AG04449 (cell line): ENCODE measurements at regions of chr10 and their contacts with region 1.

Region 1: DNA sequence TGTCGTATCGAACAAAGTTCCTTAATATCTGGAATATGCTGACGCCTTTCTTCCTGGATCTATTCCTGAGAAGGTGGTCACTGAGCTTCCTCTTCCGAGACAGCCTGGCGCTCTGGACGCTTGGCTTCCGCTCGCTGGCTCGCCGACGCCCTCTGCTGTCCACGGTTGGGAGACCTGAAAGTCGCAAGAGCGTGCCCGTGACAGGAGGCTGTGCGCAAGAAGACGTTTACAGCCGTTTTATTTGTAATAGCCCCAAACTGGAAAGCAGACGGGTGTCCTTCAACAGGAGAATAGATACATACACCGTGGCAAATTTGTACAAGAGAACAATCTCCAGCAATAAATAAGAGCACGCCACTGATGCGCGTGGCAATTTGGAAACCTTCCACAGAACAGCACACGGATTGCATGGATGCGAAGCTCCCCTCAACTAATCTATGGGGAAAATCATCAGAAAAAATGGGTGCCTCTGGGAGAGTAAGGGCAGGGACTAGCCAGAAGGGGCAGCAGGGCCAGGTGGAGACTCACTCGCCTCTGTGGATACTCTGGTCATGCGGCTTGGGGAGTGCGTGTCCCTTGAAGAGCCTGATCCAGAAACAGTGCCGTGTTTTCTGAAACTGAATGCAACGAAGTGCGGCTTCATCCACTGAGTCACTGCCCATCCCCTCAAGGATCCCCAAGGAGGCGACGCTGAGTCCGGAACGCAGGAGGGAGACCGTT is 41.5 kb upstream of the BNIP3 start:
- DNase-seq: peak; percentile 12
- H3K4me3 ChIP-seq: peak overlapping the region; percentile 36
- CTCF ChIP-seq: peak; percentile 95

Region 2: DNA sequence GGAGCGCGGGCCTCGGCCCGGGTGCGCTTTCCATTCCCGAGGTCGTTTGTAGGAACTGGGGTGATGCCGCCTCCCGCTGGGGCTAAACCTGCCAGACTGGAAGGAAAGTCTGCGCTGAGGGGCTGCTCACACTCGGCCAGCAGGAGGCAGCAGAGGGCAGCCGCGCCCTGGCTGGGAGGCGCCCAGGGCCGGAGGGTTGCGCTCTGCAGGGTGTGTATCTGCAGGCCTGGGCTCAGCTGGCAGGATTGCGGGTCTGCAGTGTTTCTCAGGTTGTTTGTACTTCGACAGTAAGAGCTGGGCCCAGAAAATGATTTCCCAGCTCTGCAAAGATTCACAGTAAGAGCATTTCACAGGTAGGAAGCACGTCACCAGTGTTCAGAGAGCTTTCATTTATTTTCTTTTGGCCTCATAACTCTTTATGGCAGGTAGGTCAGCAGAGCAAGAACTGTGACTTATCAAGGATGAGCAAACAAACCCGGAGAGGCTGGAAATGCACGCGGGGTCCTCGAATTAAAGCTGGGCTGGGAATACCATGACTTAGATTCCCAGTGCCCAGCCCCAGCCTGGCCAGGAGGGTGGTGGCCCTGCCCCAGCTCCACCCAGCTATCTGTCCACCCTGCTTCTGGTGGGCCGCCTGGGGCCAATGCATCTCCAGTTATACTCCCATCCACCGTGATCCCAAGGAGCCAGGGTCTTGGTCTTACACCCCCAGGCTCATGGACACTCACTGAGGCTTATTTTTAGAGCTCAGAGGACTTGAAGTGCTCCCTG is 137.7 kb before region 1 on chr10:
- CTCF ChIA-PET with region 1: interaction called, 83 read pairs
- POLR2A ChIA-PET with region 1: no interaction called
- DNase-seq: no peak
- H3K4me3 ChIP-seq: no peak overlapping the region
- CTCF ChIP-seq: peak; percentile 91

Region 3: DNA sequence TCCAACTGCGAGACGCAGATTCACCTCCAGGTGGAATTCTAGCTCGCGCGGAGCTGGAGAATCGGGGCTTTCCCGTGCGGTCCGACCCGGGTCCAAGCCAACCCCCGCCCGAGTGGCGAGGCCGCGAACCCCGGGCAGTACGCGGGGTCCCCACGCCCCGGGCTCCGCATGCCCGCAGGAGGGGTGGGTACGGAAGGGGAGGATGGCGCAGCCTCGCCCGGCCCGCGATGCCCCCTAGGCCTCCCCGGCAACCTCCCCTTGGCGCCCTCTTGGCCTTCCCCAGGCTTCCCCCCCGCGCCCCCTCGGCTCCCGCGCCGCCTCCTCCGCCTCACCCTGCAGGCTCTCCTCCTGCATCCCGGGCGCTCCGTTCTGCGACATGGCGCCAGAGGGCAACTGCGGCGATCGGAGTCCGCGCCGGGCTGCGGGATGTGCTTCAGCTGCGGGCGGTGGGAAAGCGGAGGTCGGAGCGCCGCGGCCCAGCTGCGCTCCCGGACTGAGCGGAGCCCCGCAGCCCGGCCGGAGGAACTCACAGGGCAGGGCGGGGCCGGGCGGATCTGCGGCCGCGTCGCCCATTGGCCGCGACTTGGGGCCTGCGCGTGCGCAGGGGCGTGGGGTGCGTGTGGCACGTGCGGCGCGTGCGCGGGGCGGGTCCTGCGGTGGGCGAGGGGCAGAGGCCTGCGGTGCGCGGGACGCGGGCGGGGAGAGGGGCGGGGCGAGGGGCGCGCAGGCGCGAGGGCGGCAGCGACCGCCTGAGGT is 41.6 kb before region 1 on chr10 and contains the start of gene BNIP3:
- CTCF ChIA-PET with region 1: interaction called, 12 read pairs
- POLR2A ChIA-PET with region 1: interaction called, 8 read pairs
- DNase-seq: peak; percentile 37
- H3K4me3 ChIP-seq: peak within 1 kb of the TSS; percentile 97
- CTCF ChIP-seq: peak; percentile 4

Region 4: GRCh38 chr10:132011024-132011423 is 12.2 kb before region 1 on chr10:
- CTCF ChIA-PET with region 1: interaction called, 11 read pairs
- POLR2A ChIA-PET with region 1: no interaction called
- DNase-seq: no peak
- H3K4me3 ChIP-seq: no peak overlapping the region
- CTCF ChIP-seq: no peak